ENCODE measurements at regions of chr15 and their contacts with region 1.

Region 1: DNA sequence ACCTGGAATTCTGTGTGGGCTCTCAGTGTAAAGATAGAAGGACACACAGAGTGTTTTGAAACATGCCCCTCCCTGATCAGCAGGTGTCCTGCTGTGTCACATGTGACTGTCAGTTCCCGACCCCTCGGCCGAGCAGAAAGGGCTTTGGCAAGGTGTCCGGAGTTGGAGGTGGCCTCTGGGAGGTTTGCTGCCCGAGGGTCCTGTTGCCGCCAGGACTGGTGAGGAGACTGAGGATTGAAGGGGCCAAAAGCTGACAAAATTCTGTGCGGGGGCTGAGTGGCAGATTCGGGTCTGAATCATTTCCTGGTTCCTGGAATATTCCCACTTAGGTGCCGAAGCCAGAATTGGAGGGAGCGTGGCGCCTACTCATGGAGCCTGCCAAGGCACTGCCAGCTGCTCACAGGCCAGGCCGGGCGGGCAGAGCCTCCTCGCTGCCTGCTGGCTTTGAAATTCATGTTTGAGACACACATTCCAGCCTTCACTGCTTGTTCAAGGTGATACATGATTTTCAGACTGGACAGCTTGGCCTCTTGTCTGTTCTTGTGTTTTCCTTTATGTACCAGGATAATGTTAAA is 83.8 kb downstream of the APBA2 start:
- DNase-seq: no peak
- H3K4me3 Mint-ChIP-seq: no peak overlapping the region
- H3K27ac Mint-ChIP-seq: no peak overlapping the region
- H3K4me1 Mint-ChIP-seq: peaks cover 2% of the 10 kb centered on the region
- H3K27me3 Mint-ChIP-seq: peaks cover 11% of the 10 kb centered on the region

Region 2: GRCh38 chr15:28935326-28935725 is 34.3 kb before region 1 on chr15:
- intact Hi-C with region 1: loop called (anchors 5 kb)
- DNase-seq: no peak
- H3K4me3 Mint-ChIP-seq: no peak overlapping the region
- H3K27ac Mint-ChIP-seq: no peak overlapping the region
- H3K4me1 Mint-ChIP-seq: peaks cover 30% of the 10 kb centered on the region
- H3K27me3 Mint-ChIP-seq: no peaks in the 10 kb centered on the region

Region 3: GRCh38 chr15:29090617-29091466 is 121.2 kb after region 1 on chr15:
- intact Hi-C with region 1: no loop called
- DNase-seq: peak; percentile 20
- H3K4me3 Mint-ChIP-seq: no peak overlapping the region
- H3K27ac Mint-ChIP-seq: no peak overlapping the region
- H3K4me1 Mint-ChIP-seq: peaks cover 11% of the 10 kb centered on the region
- H3K27me3 Mint-ChIP-seq: no peaks in the 10 kb centered on the region

Region 4: GRCh38 chr15:29225534-29226234 is 256.1 kb after region 1 on chr15:
- intact Hi-C with region 1: no loop called
- DNase-seq: no peak
- H3K4me3 Mint-ChIP-seq: no peak overlapping the region
- H3K27ac Mint-ChIP-seq: no peak overlapping the region
- H3K4me1 Mint-ChIP-seq: no peaks in the 10 kb centered on the region
- H3K27me3 Mint-ChIP-seq: peaks cover 32% of the 10 kb centered on the region